Posterior cingulate gyrus (tissue), 11 donors: ENCODE measurements at regions of chr3 and their contacts with region 1.

Region 1: GRCh38 chr3:157127831-157128767 is 31.8 kb downstream of the CCNL1 start:
- DNase-seq: no peak

Region 2: DNA sequence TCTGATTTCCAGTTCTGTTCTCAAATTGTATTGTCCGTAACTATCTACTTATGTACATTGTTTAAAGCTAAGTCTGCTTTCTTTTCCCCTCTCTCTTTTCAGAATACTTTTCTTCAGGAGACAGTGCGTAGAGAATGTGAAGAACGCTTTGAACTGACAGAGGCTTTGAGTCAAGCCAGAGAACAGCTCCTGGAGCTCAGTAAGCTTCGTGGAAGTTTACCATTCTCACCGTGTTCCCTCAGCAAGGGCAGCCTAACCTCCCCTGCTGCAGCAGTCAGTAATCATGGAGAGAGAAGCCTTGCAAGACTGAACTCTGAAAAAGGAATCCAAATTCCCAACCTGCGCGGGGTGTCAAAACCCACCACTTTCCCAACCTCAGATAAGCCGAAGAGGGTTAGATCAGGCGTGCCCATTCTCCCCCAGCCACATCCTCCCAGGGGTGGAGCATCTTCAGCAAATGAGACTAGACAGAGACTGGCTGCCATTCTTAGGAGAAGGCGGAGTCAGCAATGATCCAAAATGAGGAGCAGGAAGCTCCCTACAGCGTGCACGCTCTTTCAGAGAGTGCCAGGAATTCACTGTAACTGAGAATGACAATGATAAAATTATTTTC is 82.8 kb before region 1 on chr3:
- intact Hi-C with region 1: no loop called
- DNase-seq: no peak

Region 3: DNA sequence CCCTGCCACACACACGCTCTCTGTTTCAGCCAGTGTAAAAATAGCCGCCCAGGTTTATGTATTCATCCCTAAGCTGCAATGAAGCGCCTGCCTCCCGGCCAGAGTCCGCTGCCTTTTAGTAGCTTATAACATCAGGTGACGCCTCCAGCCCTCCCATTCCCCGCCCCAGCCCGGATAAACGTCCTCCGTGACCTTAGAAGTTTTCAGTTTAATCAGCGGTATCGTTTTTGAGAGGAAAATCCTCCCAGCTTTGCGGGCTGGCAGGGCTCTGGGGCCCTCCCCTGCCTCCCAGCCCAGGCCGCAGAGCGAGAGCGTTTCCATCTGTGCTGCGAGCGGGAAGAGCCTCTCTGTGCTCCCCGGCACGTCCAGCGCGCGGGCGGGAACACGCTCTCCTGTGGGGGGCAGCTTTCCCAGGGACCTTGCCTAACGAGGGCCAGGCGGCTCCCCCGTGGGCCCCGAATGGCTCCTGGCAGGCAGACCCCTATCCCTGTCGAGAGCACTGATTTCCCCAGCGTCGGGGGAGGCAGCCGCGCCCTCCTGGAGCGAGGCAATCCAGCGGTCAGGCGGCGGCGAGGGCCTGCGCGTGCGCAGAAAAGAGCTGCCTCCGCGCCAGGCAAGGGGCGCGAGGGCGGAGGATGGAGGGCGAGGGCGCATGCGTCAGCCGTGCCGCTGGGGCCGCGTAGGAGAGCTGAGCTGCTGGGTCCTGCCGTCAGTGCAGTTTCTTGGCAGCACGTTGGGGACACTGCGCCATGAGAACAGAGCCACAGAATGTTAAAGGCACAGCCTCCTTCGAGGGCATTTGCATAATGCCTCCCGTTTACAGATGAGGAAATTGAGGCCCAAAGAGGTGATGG is 39.3 kb before region 1 on chr3:
- intact Hi-C with region 1: loop called (anchors 2 kb)
- DNase-seq: peak; percentile 92 to 99 (median 94)